ENCODE measurements at regions of chr5 and their contacts with region 1.

Region 1: DNA sequence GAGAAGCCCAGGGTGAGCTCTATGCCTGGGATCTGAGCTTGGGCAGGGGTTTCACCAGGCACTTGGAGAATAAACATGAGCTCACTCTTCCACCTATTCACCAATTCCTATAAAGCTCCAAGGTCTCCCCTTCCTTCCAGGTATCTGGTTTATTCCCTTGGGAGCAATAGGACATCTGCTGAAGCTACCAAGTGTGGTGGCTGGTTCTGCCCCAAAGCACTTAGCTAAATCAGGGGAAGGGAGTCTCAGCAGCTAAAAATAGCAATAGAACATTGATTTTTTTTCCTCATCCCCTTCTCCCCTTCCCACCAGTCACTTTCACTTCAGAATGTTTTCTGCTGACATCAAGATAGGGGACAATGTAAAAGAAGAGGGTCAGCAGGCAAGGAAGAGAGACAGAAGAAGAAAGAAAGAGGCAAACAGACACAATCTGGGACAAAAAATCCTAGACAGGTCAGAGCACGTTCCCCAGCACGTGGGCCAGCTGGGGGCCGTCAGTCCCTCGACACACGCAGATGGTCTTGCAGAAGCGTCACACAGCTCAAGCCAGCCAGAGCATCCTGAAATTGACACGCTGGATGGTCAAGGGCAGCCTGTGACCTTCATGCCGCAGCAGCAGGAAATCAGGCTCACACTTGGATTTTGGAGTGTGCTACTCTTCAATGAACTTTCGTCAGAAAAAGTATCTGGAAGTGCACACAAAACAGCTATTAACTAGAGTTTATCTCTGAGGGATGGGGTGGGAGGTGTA is 176.0 kb downstream of the ZNF608 start:
- DNase-seq: no peak
- H3K4me3 Mint-ChIP-seq: no peak overlapping the region
- H3K27ac Mint-ChIP-seq: no peak overlapping the region
- H3K4me1 Mint-ChIP-seq: no peaks in the 10 kb centered on the region
- H3K27me3 Mint-ChIP-seq: no peaks in the 10 kb centered on the region
- CTCF ChIP-seq: no peak

Region 2: DNA sequence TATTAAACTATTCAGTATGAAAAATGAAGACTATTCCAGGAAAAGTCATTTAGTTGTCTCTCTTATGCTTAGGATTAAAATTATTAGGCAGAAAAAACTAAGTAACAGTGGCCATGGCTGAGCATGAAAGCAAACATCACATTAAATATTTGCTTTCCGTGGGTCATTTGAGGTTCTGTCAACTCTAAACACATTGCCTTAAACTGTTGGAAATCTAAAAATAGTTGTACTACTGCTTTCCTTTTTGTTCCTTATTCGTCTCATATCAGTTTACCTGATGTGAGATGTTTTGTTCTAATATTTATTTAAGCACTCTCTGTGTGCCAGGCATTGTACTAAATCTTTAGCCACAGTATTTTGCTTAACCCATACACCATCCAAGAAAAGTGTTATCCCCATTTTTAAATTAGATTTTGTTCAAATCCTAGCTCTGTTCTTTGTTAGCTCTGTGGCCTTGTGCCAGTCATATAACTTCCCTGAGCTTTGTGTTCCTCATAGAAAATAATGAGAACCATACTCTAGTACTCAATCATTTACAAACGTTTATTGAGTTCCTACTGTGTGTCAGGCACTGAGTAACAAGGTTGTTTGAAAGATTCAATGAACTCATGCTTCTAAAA is 194.6 kb after region 1 on chr5:
- CTCF ChIA-PET with region 1: no interaction called
- POLR2A ChIA-PET with region 1: no interaction called
- intact Hi-C with region 1: no loop called
- DNase-seq: no peak
- H3K4me3 Mint-ChIP-seq: no peak overlapping the region
- H3K27ac Mint-ChIP-seq: no peak overlapping the region
- H3K4me1 Mint-ChIP-seq: no peaks in the 10 kb centered on the region
- H3K27me3 Mint-ChIP-seq: no peaks in the 10 kb centered on the region
- CTCF ChIP-seq: no peak

Region 3: DNA sequence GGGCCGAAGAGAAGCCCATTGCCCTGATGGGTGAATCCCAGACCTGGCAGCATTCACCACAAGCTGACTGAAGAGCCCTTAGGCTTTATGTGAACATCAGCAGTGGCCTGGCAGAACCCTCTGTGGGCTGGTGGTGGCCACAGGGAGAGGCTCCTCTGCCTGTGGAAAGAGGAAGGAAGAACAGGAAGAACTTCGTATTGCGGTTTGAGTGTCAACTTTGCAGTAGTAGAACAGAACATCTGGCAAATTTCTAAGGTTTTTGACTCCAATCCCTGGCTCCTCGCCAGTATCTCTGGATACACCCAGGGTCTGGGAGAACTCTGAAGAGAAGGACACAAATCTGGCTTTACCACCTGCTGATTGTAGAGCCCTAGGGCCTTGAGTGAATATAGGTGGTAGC is 1496.4 kb after region 1 on chr5:
- CTCF ChIA-PET with region 1: interaction called, 10 read pairs
- POLR2A ChIA-PET with region 1: no interaction called
- intact Hi-C with region 1: no loop called
- DNase-seq: no peak
- H3K4me3 Mint-ChIP-seq: no peak overlapping the region
- H3K27ac Mint-ChIP-seq: no peak overlapping the region
- H3K4me1 Mint-ChIP-seq: no peaks in the 10 kb centered on the region
- H3K27me3 Mint-ChIP-seq: no peaks in the 10 kb centered on the region
- CTCF ChIP-seq: no peak

Measured in MCF 10A (cell line).